ENCODE measurements at regions of chr4 and their contacts with region 1.

Region 1: GRCh38 chr4:153344131-153345010 is at the start of gene MND1:
- DNase-seq: peak; percentile 71
- ATAC-seq: peak; percentile 91
- H3K4me3 ChIP-seq: peak within 1 kb of the TSS; percentile 75
- H3K27ac ChIP-seq: peak within 1 kb of the TSS; percentile 53
- H3K4me1 ChIP-seq: peaks cover 5% of the 10 kb centered on the region; the same call in 1 of the 2 replicates
- H3K27me3 ChIP-seq: no peaks in the 10 kb centered on the region
- CTCF ChIP-seq: peak; percentile 90
- POLR2A ChIP-seq: peak; percentile 28; the same call in 1 of the 2 replicates
- RAD21 ChIP-seq: peak; percentile 84
- total RNA-seq, gene MND1: 0.36 and 3.3 TPM in 2 replicates

Region 2: GRCh38 chr4:153233761-153234371 is 110.5 kb before region 1 on chr4:
- CTCF ChIA-PET with region 1: no interaction called
- POLR2A ChIA-PET with region 1: no interaction called
- dilution Hi-C with region 1: no loop called
- in situ Hi-C with region 1: no loop called
- intact Hi-C with region 1: no loop called
- DNase-seq: peak; percentile 93
- ATAC-seq: peak; percentile 77
- H3K4me3 ChIP-seq: no peak overlapping the region
- H3K27ac ChIP-seq: peak overlapping the region; percentile 95
- H3K4me1 ChIP-seq: peaks cover 14% of the 10 kb centered on the region
- H3K27me3 ChIP-seq: no peaks in the 10 kb centered on the region
- CTCF ChIP-seq: no peak
- POLR2A ChIP-seq: no peak
- RAD21 ChIP-seq: no peak

Region 3: GRCh38 chr4:153448003-153448731 is 103.8 kb after region 1 on chr4:
- CTCF ChIA-PET with region 1: no interaction called
- POLR2A ChIA-PET with region 1: no interaction called
- dilution Hi-C with region 1: no loop called
- in situ Hi-C with region 1: no loop called
- intact Hi-C with region 1: loop called (anchors 5 kb)
- DNase-seq: peak; percentile 81
- ATAC-seq: peak; percentile 59
- H3K4me3 ChIP-seq: peak overlapping the region; percentile 9; the same call in 1 of the 2 replicates
- H3K27ac ChIP-seq: peak overlapping the region; percentile 7; the same call in 1 of the 2 replicates
- H3K4me1 ChIP-seq: peaks cover 5% of the 10 kb centered on the region
- H3K27me3 ChIP-seq: no peaks in the 10 kb centered on the region
- CTCF ChIP-seq: no peak
- POLR2A ChIP-seq: no peak
- RAD21 ChIP-seq: no peak

Region 4: DNA sequence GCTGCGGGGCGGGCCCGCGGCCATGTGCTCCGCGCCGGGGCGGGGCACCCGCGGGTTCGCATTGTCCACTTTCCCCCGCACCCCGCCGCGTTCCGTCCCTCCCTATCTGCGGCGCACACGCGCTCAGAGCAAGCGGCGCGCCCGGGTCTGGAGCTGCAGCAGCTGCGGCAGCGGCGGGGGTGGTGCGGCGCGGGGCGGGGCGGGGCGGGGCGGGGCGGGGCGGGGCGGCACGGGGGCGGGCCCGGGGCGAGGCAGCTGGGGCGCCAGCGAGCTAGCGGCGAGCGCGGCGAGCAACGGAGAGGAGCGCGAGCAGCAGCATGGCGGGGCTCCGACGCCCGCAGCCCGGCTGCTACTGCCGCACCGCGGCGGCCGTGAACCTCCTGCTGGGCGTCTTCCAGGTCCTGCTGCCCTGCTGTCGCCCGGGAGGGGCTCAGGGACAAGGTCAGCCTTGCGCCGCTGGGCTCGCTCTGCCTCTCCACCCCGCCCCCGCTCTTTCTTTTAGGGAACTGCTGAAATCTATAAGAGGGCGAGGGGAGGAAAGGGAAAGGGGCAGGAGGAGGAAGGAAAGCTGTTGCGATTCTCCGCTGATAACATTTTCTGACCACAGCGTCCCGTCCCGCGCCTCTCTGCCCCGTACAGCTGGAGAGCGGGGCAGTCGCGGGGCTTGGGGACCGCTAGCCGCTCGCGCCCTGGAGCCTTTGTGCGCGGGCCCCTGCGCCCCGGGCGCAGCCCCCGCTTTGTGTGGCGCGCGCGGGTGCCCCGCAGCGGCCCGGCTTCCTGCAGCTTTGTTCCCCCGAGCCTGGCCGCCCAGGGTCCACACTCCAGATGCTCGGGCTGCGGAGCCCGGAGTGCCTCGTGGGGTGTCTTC is 121.9 kb after region 1 on chr4 and contains the start of gene TMEM131L:
- CTCF ChIA-PET with region 1: interaction called, 6 read pairs
- POLR2A ChIA-PET with region 1: no interaction called
- dilution Hi-C with region 1: no loop called
- in situ Hi-C with region 1: no loop called
- intact Hi-C with region 1: loop called (anchors 1 kb)
- DNase-seq: peak; percentile 52
- ATAC-seq: peak; percentile 90
- H3K4me3 ChIP-seq: peak within 1 kb of the TSS; percentile 96
- H3K27ac ChIP-seq: peak within 1 kb of the TSS; percentile 65
- H3K4me1 ChIP-seq: peaks cover 2% of the 10 kb centered on the region; the same call in 1 of the 2 replicates
- H3K27me3 ChIP-seq: no peaks in the 10 kb centered on the region
- CTCF ChIP-seq: no peak
- POLR2A ChIP-seq: 0 out of 2 replicates have a peak, but pooled peaks have one; percentile 33
- RAD21 ChIP-seq: no peak; the same call in 1 of the 2 replicates
- total RNA-seq, gene TMEM131L: 16.1 and 23.8 TPM in 2 replicates

Region 5: GRCh38 chr4:153573881-153574802 is 229.8 kb after region 1 on chr4:
- CTCF ChIA-PET with region 1: interaction called, 11 read pairs
- POLR2A ChIA-PET with region 1: no interaction called
- dilution Hi-C with region 1: no loop called
- in situ Hi-C with region 1: loop called (anchors 5 kb)
- intact Hi-C with region 1: loop called (anchors 1 kb)
- DNase-seq: peak; percentile 88
- ATAC-seq: peak; percentile 97
- H3K4me3 ChIP-seq: no peak overlapping the region
- H3K27ac ChIP-seq: no peak overlapping the region
- H3K4me1 ChIP-seq: no peaks in the 10 kb centered on the region
- H3K27me3 ChIP-seq: no peaks in the 10 kb centered on the region
- CTCF ChIP-seq: peak; percentile 82
- POLR2A ChIP-seq: no peak
- RAD21 ChIP-seq: peak; percentile 93

Region 6: GRCh38 chr4:153643406-153644383 is 299.3 kb after region 1 on chr4:
- CTCF ChIA-PET with region 1: interaction called, 3 read pairs
- POLR2A ChIA-PET with region 1: no interaction called
- dilution Hi-C with region 1: no loop called
- in situ Hi-C with region 1: no loop called
- intact Hi-C with region 1: loop called (anchors 2 kb)
- DNase-seq: peak; percentile 59
- ATAC-seq: peak; percentile 93
- H3K4me3 ChIP-seq: no peak overlapping the region
- H3K27ac ChIP-seq: no peak overlapping the region
- H3K4me1 ChIP-seq: no peaks in the 10 kb centered on the region
- H3K27me3 ChIP-seq: no peaks in the 10 kb centered on the region; the same call in 1 of the 2 replicates
- CTCF ChIP-seq: peak; percentile 53
- POLR2A ChIP-seq: no peak
- RAD21 ChIP-seq: peak; percentile 47

Region 7: GRCh38 chr4:153750197-153750817 is 405.9 kb after region 1 on chr4:
- CTCF ChIA-PET with region 1: no interaction called
- POLR2A ChIA-PET with region 1: no interaction called
- dilution Hi-C with region 1: no loop called
- in situ Hi-C with region 1: no loop called
- intact Hi-C with region 1: loop called (anchors 2 kb)
- DNase-seq: peak; percentile 58
- ATAC-seq: peak; percentile 90
- H3K4me3 ChIP-seq: no peak overlapping the region
- H3K27ac ChIP-seq: no peak overlapping the region
- H3K4me1 ChIP-seq: no peaks in the 10 kb centered on the region
- H3K27me3 ChIP-seq: no peaks in the 10 kb centered on the region; the same call in 1 of the 2 replicates
- CTCF ChIP-seq: peak; percentile 69
- POLR2A ChIP-seq: no peak
- RAD21 ChIP-seq: peak; percentile 63